B cell (primary cell): ENCODE measurements at regions of chr1 and their contacts with region 1.

Region 1: GRCh38 chr1:12124693-12125421 is 41.9 kb upstream of the TNFRSF1B start:
- DNase-seq: peak; percentile 87
- ATAC-seq: peak; percentile 85
- H3K4me3 ChIP-seq: no peak overlapping the region
- H3K4me3 Mint-ChIP-seq: peak overlapping the region; percentile 65
- H3K27ac ChIP-seq: no peak overlapping the region
- H3K27ac Mint-ChIP-seq: peak overlapping the region; percentile 83
- H3K4me1 ChIP-seq: peaks cover 20 to 31% of the 10 kb centered on the region in 2 donors
- H3K4me1 Mint-ChIP-seq: peaks cover 33% of the 10 kb centered on the region
- H3K27me3 ChIP-seq: no peaks in the 10 kb centered on the region
- H3K27me3 Mint-ChIP-seq: no peaks in the 10 kb centered on the region
- CTCF ChIP-seq: peak; percentile 93

Region 2: DNA sequence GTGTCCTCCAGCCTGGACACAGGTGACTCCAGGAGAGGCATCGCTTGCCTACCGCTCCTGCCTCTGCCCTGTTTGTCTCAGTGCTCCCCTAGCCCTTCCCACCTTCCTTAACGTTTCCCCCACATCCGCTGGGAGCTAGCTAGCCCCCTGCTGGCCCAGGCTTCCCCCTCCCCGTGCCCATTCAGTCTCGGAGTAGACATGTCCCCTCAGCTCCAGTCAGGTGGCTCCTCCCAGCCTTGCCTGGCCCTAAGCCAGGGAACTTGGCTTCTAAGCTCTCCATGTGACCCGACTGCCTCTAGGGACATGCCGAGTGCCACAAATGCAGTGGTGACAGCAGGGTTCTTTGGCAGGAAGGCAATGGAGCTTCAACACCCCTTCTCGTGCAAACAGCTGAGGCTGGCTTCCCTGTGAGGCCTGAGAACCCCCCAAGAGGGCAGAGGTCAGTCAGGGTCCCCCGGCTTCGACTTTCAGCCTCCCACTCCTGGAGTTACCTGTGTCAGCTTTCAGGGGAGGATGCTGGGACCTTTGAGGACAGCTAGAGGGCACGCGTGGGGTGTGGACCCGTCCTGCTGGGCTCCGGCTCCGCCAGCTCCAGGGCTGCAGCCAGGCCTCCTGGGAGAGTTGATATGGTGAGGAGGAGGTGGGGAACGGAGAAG is 417.1 kb before region 1 on chr1:
- CTCF ChIA-PET with region 1: no interaction called
- POLR2A ChIA-PET with region 1: no interaction called
- intact Hi-C with region 1: no loop called
- DNase-seq: no peak
- ATAC-seq: no peak
- H3K4me3 ChIP-seq: no peak overlapping the region
- H3K4me3 Mint-ChIP-seq: no peak overlapping the region
- H3K27ac ChIP-seq: no peak overlapping the region
- H3K27ac Mint-ChIP-seq: no peak overlapping the region
- H3K4me1 ChIP-seq: no peaks in the 10 kb centered on the region
- H3K4me1 Mint-ChIP-seq: no peaks in the 10 kb centered on the region
- H3K27me3 ChIP-seq: peaks cover 0 to 12% (median 0%) of the 10 kb centered on the region in 4 experiments
- H3K27me3 Mint-ChIP-seq: peaks cover 13% of the 10 kb centered on the region
- CTCF ChIP-seq: no peak

Region 3: GRCh38 chr1:12113433-12114339 is 11.2 kb before region 1 on chr1:
- CTCF ChIA-PET with region 1: interaction called, 13 read pairs
- POLR2A ChIA-PET with region 1: no interaction called
- intact Hi-C with region 1: no loop called
- DNase-seq: no peak
- ATAC-seq: no peak
- H3K4me3 ChIP-seq: no peak overlapping the region
- H3K4me3 Mint-ChIP-seq: no peak overlapping the region
- H3K27ac ChIP-seq: no peak overlapping the region
- H3K27ac Mint-ChIP-seq: no peak overlapping the region
- H3K4me1 ChIP-seq: no peaks in the 10 kb centered on the region
- H3K4me1 Mint-ChIP-seq: no peaks in the 10 kb centered on the region
- H3K27me3 ChIP-seq: no peaks in the 10 kb centered on the region
- H3K27me3 Mint-ChIP-seq: no peaks in the 10 kb centered on the region
- CTCF ChIP-seq: no peak

Region 4: GRCh38 chr1:12153181-12153785 is 28.4 kb after region 1 on chr1:
- CTCF ChIA-PET with region 1: interaction called, 169 read pairs
- POLR2A ChIA-PET with region 1: interaction called, 5 read pairs
- intact Hi-C with region 1: loop called (anchors 2 kb)
- DNase-seq: peak; percentile 89
- ATAC-seq: peak; percentile 48
- H3K4me3 ChIP-seq: peak overlapping the region in 1 of 5 experiments; percentile 43
- H3K4me3 Mint-ChIP-seq: peak overlapping the region; percentile 69
- H3K27ac ChIP-seq: peak overlapping the region; percentile 93
- H3K27ac Mint-ChIP-seq: peak overlapping the region; percentile 92
- H3K4me1 ChIP-seq: peaks cover 74 to 91% of the 10 kb centered on the region in 2 donors
- H3K4me1 Mint-ChIP-seq: peaks cover 85% of the 10 kb centered on the region
- H3K27me3 ChIP-seq: no peaks in the 10 kb centered on the region
- H3K27me3 Mint-ChIP-seq: no peaks in the 10 kb centered on the region
- CTCF ChIP-seq: no peak

Region 5: GRCh38 chr1:12177999-12178441 is 53.2 kb after region 1 on chr1:
- CTCF ChIA-PET with region 1: interaction called, 96 read pairs
- POLR2A ChIA-PET with region 1: no interaction called
- intact Hi-C with region 1: no loop called
- DNase-seq: no peak
- ATAC-seq: no peak
- H3K4me3 ChIP-seq: no peak overlapping the region
- H3K4me3 Mint-ChIP-seq: peak overlapping the region; percentile 59
- H3K27ac ChIP-seq: peak overlapping the region in 1 of 2 donors; percentile 10
- H3K27ac Mint-ChIP-seq: peak overlapping the region; percentile 27
- H3K4me1 ChIP-seq: peaks cover 45 to 82% of the 10 kb centered on the region in 2 donors
- H3K4me1 Mint-ChIP-seq: peaks cover 79% of the 10 kb centered on the region
- H3K27me3 ChIP-seq: no peaks in the 10 kb centered on the region
- H3K27me3 Mint-ChIP-seq: no peaks in the 10 kb centered on the region
- CTCF ChIP-seq: no peak

Region 6: DNA sequence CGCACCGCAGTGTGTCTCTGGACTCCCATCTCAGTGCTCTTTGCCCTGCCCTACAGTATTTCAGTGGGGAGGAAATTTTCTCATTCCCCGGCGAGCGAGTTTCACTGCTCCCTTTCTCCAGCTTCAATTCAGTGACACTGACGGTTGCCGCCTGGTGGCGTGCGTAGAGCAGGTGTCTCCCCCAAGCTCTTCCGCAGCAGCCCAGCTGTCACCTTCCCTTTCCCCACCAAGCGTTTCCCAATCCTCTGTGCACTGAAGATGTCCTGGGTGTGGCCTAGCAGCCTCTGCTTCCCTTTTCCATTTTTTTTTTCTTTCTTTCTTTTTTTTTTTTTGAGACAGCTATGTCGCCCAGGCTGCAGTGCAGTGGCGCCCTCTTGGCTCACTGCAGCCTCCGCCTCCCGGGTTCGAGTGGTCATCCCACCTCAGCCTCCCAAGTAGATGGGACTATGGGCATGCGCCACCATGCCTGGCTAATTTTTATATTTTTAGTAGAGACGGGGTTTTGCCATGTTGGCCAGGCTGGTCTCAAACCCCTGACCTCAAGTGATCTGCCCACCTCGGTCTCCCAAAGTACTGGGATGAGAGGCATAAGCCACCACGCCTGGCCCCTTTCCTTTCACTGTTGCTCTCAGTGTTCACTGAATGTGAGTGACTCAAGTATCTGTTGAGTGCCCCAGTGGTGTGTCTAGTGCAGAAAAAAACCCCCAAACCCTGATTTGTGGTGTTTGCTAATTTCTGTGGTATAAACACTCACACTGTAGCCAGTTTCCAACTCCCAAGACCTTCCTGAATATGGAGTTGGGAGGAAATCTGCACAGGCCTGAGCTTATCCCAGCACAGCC is 72.0 kb after region 1 on chr1:
- CTCF ChIA-PET with region 1: interaction called, 685 read pairs
- POLR2A ChIA-PET with region 1: interaction called, 10 read pairs
- intact Hi-C with region 1: no loop called
- DNase-seq: peak; percentile 37
- ATAC-seq: peak; percentile 39
- H3K4me3 ChIP-seq: no peak overlapping the region
- H3K4me3 Mint-ChIP-seq: peak overlapping the region; percentile 21
- H3K27ac ChIP-seq: no peak overlapping the region
- H3K27ac Mint-ChIP-seq: peak overlapping the region; percentile 53
- H3K4me1 ChIP-seq: peaks cover 13 to 39% of the 10 kb centered on the region in 2 donors
- H3K4me1 Mint-ChIP-seq: peaks cover 51% of the 10 kb centered on the region
- H3K27me3 ChIP-seq: no peaks in the 10 kb centered on the region
- H3K27me3 Mint-ChIP-seq: no peaks in the 10 kb centered on the region
- CTCF ChIP-seq: peak; percentile 28

Region 7: GRCh38 chr1:12220890-12221289 is 96.0 kb after region 1 on chr1:
- CTCF ChIA-PET with region 1: interaction called, 45 read pairs
- POLR2A ChIA-PET with region 1: no interaction called
- intact Hi-C with region 1: no loop called
- DNase-seq: no peak
- ATAC-seq: no peak
- H3K4me3 ChIP-seq: no peak overlapping the region
- H3K4me3 Mint-ChIP-seq: no peak overlapping the region
- H3K27ac ChIP-seq: no peak overlapping the region
- H3K27ac Mint-ChIP-seq: no peak overlapping the region
- H3K4me1 ChIP-seq: peaks cover 0 to 3% of the 10 kb centered on the region in 2 donors
- H3K4me1 Mint-ChIP-seq: no peaks in the 10 kb centered on the region
- H3K27me3 ChIP-seq: peaks cover 0 to 7% (median 0%) of the 10 kb centered on the region in 4 experiments
- H3K27me3 Mint-ChIP-seq: peaks cover 4% of the 10 kb centered on the region
- CTCF ChIP-seq: no peak

Region 8: DNA sequence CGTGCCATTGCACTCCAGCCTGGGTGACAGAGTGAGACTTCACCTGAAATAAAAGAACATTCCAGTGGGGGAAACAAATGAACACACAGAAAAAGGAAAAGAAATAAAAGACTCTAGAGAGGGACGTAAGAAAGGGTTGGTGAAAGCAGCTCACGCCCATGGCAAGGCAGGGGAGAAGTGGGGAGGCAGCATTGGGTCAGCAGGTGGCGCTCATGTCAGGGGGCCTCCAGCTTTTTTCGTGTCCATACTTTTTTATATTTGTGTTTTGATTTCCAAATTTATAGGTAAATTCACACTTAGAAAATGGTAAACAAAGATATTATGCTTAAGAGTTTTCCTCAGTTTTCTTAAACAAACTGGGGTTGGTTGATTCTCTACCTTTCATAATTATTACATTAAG is 150.5 kb after region 1 on chr1:
- CTCF ChIA-PET with region 1: interaction called, 18 read pairs
- POLR2A ChIA-PET with region 1: no interaction called
- intact Hi-C with region 1: no loop called
- DNase-seq: peak; percentile 29
- ATAC-seq: no peak
- H3K4me3 ChIP-seq: no peak overlapping the region
- H3K4me3 Mint-ChIP-seq: no peak overlapping the region
- H3K27ac ChIP-seq: no peak overlapping the region
- H3K27ac Mint-ChIP-seq: peak overlapping the region; percentile 63
- H3K4me1 ChIP-seq: no peaks in the 10 kb centered on the region
- H3K4me1 Mint-ChIP-seq: no peaks in the 10 kb centered on the region
- H3K27me3 ChIP-seq: no peaks in the 10 kb centered on the region
- H3K27me3 Mint-ChIP-seq: no peaks in the 10 kb centered on the region
- CTCF ChIP-seq: peak; percentile 65